MCF 10A (cell line): ENCODE measurements at regions of chr3 and their contacts with region 1.

Region 1: GRCh38 chr3:36993326-36994283 is at the start of gene MLH1:
- DNase-seq: peak; percentile 89
- H3K4me3 Mint-ChIP-seq: no peak within 1 kb of the TSS
- H3K27ac Mint-ChIP-seq: no peak within 1 kb of the TSS
- H3K4me1 Mint-ChIP-seq: no peaks in the 10 kb centered on the region
- H3K27me3 Mint-ChIP-seq: no peaks in the 10 kb centered on the region
- CTCF ChIP-seq: no peak
- total RNA-seq, gene MLH1: 57.0 and 65.0 TPM in 2 replicates

Region 2: GRCh38 chr3:36911990-36912804 is 81.4 kb before region 1 on chr3:
- CTCF ChIA-PET with region 1: interaction called, 3 read pairs
- POLR2A ChIA-PET with region 1: interaction called, 25 read pairs
- intact Hi-C with region 1: no loop called
- DNase-seq: peak; percentile 81
- H3K4me3 Mint-ChIP-seq: peak overlapping the region; percentile 71
- H3K27ac Mint-ChIP-seq: peak overlapping the region; percentile 93
- H3K4me1 Mint-ChIP-seq: peaks cover 28% of the 10 kb centered on the region
- H3K27me3 Mint-ChIP-seq: no peaks in the 10 kb centered on the region
- CTCF ChIP-seq: no peak

Region 3: GRCh38 chr3:36981006-36981405 is 12.6 kb before region 1 on chr3:
- CTCF ChIA-PET with region 1: interaction called, 4 read pairs
- POLR2A ChIA-PET with region 1: interaction called, 24 read pairs
- intact Hi-C with region 1: no loop called
- DNase-seq: no peak
- H3K4me3 Mint-ChIP-seq: no peak overlapping the region
- H3K27ac Mint-ChIP-seq: no peak overlapping the region
- H3K4me1 Mint-ChIP-seq: no peaks in the 10 kb centered on the region
- H3K27me3 Mint-ChIP-seq: no peaks in the 10 kb centered on the region
- CTCF ChIP-seq: no peak

Region 4: GRCh38 chr3:37103103-37103808 is 109.7 kb after region 1 on chr3:
- CTCF ChIA-PET with region 1: no interaction called
- POLR2A ChIA-PET with region 1: no interaction called
- intact Hi-C with region 1: no loop called
- DNase-seq: no peak
- H3K4me3 Mint-ChIP-seq: no peak overlapping the region
- H3K27ac Mint-ChIP-seq: no peak overlapping the region
- H3K4me1 Mint-ChIP-seq: no peaks in the 10 kb centered on the region
- H3K27me3 Mint-ChIP-seq: no peaks in the 10 kb centered on the region
- CTCF ChIP-seq: no peak

Region 5: DNA sequence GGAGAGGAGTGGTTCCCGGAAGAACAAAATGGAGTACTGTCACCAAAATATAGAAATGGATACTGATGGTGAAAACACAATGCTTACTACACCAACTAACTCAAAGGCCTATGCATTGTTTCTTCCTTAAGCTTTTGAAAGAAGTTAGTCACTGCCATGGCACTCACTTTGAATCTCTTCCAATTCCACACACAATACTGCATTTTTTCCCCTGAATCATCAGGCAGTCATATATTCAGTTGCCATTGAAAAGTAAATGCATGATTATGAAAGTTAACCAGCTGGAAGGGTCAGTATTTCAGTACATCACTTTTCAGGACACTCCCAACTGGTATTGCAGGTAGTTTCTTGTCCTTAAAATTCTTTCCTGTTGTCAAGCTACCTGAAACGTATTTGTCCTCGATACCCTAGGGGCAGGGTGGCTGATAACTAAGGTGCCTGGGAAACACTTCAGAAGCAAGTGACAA is 189.8 kb after region 1 on chr3:
- CTCF ChIA-PET with region 1: interaction called, 3 read pairs
- POLR2A ChIA-PET with region 1: interaction called, 17 read pairs
- intact Hi-C with region 1: no loop called
- DNase-seq: peak; percentile 94
- H3K4me3 Mint-ChIP-seq: peak overlapping the region; percentile 56
- H3K27ac Mint-ChIP-seq: peak overlapping the region; percentile 68
- H3K4me1 Mint-ChIP-seq: peaks cover 31% of the 10 kb centered on the region
- H3K27me3 Mint-ChIP-seq: no peaks in the 10 kb centered on the region
- CTCF ChIP-seq: no peak

Region 6: DNA sequence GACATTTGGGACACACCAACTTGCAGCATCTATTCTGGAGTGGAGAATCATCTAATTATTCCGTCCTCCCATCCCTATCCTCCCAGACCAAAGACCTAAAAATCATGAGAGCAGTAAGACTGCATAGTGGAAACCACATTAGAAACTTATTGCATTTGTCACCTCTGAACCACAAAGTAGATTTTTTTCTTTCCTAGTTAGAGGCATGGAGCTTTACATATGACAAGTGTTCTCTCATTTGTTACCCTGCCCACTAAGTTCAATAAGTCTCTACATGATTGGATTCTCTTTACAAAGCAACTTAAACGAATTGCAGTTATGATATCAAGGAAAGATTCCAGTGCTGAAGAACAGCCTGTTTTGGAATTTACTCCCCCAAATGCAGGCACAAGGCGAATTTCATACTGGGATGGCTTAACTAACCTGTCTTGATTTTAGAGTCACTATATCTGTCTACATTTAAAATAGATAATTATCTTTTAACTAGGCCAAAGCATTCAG is 223.0 kb after region 1 on chr3:
- CTCF ChIA-PET with region 1: interaction called, 10 read pairs
- POLR2A ChIA-PET with region 1: interaction called, 8 read pairs
- intact Hi-C with region 1: loop called (anchors 1 kb)
- DNase-seq: no peak
- H3K4me3 Mint-ChIP-seq: no peak overlapping the region
- H3K27ac Mint-ChIP-seq: no peak overlapping the region
- H3K4me1 Mint-ChIP-seq: peaks cover 10% of the 10 kb centered on the region
- H3K27me3 Mint-ChIP-seq: no peaks in the 10 kb centered on the region
- CTCF ChIP-seq: no peak

Region 7: DNA sequence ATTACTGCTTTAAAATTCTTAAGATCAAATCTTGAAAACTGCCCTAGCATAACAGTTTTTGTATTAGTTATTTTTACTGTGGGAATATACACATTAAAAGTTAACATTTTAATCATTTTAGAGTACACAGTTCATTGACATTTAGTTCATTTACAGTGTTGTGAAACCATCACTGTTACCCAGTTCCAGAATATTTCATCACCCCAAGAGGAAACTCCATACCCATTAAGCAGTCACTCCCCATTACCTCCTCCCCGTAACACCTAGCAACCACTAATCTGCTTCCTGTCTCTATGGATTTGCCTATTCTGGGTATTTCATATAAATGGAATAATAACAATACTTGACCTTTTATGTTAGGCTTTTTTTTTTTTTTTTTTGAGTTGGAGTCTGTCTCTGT is 344.9 kb after region 1 on chr3:
- CTCF ChIA-PET with region 1: no interaction called
- POLR2A ChIA-PET with region 1: no interaction called
- intact Hi-C with region 1: no loop called
- DNase-seq: peak; percentile 52
- H3K4me3 Mint-ChIP-seq: no peak overlapping the region
- H3K27ac Mint-ChIP-seq: no peak overlapping the region
- H3K4me1 Mint-ChIP-seq: no peaks in the 10 kb centered on the region
- H3K27me3 Mint-ChIP-seq: no peaks in the 10 kb centered on the region
- CTCF ChIP-seq: no peak